OCI-LY7 (cell line): ENCODE measurements at regions of chr2 and their contacts with region 1.

Region 1: GRCh38 chr2:231227309-231228162 is 29.1 kb downstream of the ARMC9 start:
- DNase-seq: peak; percentile 84
- H3K4me3 ChIP-seq: no peak overlapping the region
- H3K27ac ChIP-seq: peak overlapping the region; percentile 66
- H3K4me1 ChIP-seq: peaks cover 36% of the 10 kb centered on the region
- CTCF ChIP-seq: peak; percentile 97

Region 2: GRCh38 chr2:231104115-231104713 is 123.3 kb before region 1 on chr2:
- CTCF ChIA-PET with region 1: no interaction called
- POLR2A ChIA-PET with region 1: no interaction called
- intact Hi-C with region 1: loop called (anchors 5 kb)
- DNase-seq: peak; percentile 64
- H3K4me3 ChIP-seq: no peak overlapping the region
- H3K27ac ChIP-seq: no peak overlapping the region
- H3K4me1 ChIP-seq: peaks cover 6% of the 10 kb centered on the region
- CTCF ChIP-seq: peak; percentile 92

Region 3: GRCh38 chr2:231124838-231125568 is 102.5 kb before region 1 on chr2 and contains the start of gene HTR2B:
- CTCF ChIA-PET with region 1: no interaction called
- POLR2A ChIA-PET with region 1: no interaction called
- intact Hi-C with region 1: no loop called
- DNase-seq: no peak
- H3K4me3 ChIP-seq: no peak within 1 kb of the TSS
- H3K27ac ChIP-seq: no peak within 1 kb of the TSS
- H3K4me1 ChIP-seq: no peaks in the 10 kb centered on the region
- CTCF ChIP-seq: no peak
- total RNA-seq, gene HTR2B: not detected in 2 replicates

Region 4: GRCh38 chr2:231190531-231191197 is 36.9 kb before region 1 on chr2:
- CTCF ChIA-PET with region 1: no interaction called
- POLR2A ChIA-PET with region 1: no interaction called
- intact Hi-C with region 1: no loop called
- DNase-seq: no peak
- H3K4me3 ChIP-seq: no peak overlapping the region
- H3K27ac ChIP-seq: no peak overlapping the region
- H3K4me1 ChIP-seq: no peaks in the 10 kb centered on the region
- CTCF ChIP-seq: no peak

Region 5: GRCh38 chr2:231297108-231297908 is 69.8 kb after region 1 on chr2:
- CTCF ChIA-PET with region 1: no interaction called
- POLR2A ChIA-PET with region 1: interaction called, 3 read pairs
- intact Hi-C with region 1: loop called (anchors 5 kb)
- DNase-seq: peak; percentile 82
- H3K4me3 ChIP-seq: peak overlapping the region; percentile 35
- H3K27ac ChIP-seq: no peak overlapping the region
- H3K4me1 ChIP-seq: peaks cover 36% of the 10 kb centered on the region
- CTCF ChIP-seq: peak; percentile 89

Region 6: DNA sequence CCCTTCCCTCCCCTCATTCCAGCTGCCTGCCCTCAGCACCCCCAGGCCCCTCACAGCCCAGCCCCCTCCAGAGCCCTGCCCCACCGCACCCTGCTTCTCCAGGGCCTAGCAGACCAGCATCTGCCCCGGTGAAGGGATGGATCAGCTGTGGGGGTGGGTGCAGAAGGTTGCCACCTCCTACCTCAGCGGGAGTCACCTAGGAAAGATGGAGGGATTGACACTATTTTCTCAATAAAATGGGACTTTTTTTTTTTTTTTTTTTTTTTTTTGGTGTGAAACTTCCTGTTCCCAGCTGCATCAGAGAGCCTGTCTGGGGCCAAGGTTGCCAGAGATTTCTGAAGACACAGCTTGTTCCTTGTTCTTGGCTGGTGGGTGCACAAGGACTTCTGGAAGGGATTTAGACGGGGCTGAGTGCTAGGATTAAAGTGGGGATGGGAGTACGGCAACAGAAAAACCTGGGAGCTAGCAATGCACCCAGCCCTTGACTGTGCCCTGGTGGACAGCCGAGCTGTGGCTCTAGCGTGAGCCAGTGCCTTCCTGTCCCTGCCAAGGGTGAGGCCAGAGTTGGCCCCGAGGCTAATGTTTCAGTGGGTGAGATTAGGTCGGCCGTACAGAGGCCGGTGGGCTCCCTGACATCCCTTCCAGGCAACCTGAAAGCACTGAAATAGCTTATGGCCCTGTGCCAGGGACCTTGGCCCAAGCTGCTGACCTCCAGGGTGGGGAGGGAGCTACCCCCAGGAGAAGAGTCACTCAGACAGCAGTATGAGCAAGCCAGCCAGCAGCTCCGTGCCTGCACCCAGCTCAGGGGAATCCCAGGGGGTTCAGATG is 172.5 kb after region 1 on chr2:
- CTCF ChIA-PET with region 1: interaction called, 12 read pairs
- POLR2A ChIA-PET with region 1: interaction called, 15 read pairs
- intact Hi-C with region 1: no loop called
- DNase-seq: no peak
- H3K4me3 ChIP-seq: no peak overlapping the region
- H3K27ac ChIP-seq: no peak overlapping the region
- H3K4me1 ChIP-seq: peaks cover 21% of the 10 kb centered on the region
- CTCF ChIP-seq: no peak

Region 7: DNA sequence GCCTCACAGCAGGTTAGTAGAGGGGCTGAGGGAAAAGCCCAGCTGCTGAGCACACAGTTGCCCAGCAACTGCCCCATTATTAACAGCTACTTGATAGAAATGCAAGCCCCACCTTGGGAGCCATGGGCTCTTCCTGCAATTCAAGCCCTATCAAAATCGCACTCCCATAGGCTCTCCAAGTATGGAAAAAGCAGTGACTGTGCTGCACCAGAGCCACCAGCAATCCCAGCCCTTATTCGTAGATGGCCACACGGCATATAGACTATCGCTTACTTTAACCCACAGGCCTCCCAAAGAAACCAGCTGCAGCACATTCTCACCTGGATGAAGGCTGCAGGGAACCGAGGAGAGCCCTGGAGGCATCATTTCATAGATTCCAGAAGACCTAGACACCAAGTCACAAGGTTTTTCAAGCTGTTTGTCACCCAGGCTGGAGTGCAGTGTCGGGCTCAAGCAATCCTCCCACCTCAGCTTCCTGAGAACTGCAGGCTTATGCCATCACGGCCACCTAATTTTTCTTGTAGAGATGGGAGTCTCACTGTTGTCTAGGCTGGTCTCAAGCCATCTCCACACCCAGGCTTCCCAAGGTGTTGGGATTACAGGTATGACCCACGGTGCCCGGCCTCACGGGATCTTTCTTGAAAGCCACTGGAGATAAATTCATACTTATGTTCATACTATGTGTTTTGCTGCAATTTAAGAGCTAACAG is 225.4 kb after region 1 on chr2:
- CTCF ChIA-PET with region 1: interaction called, 3 read pairs
- POLR2A ChIA-PET with region 1: interaction called, 3 read pairs
- intact Hi-C with region 1: loop called (anchors 1 kb)
- DNase-seq: peak; percentile 22
- H3K4me3 ChIP-seq: no peak overlapping the region
- H3K27ac ChIP-seq: peak overlapping the region; percentile 1
- H3K4me1 ChIP-seq: no peaks in the 10 kb centered on the region
- CTCF ChIP-seq: no peak

Region 8: DNA sequence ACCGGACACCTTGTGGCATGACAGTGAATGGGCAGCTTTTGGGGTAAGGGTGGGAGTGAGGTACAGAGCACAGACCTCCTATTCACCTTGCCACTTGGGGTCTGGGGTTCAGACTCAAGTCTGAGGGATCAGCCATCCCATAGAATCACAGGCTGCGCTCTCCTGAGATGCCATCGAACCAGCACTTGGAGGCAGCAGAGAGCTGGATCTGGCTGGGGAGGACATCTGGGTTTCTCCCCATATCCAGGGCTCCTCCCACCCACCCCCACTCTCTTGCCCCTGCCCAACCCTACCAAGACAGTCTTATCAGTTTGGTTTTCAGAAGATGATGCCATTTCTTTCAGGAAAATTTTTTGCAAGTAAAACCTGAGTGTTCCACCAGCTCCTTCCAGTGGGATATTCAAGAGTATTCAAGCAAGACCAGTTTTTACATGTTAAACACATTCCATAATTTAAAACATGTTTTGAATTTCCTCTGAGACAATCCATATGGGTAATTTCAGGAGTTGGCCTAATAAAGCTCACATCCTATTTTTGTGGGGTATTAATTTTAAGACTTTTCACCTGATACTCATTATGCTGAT is 335.9 kb after region 1 on chr2:
- CTCF ChIA-PET with region 1: no interaction called
- POLR2A ChIA-PET with region 1: no interaction called
- intact Hi-C with region 1: loop called (anchors 10 kb)
- DNase-seq: peak; percentile 68
- H3K4me3 ChIP-seq: no peak overlapping the region
- H3K27ac ChIP-seq: no peak overlapping the region
- H3K4me1 ChIP-seq: peaks cover 6% of the 10 kb centered on the region
- CTCF ChIP-seq: peak; percentile 76